Lower leg skin (tissue), 4 donors: ENCODE measurements at regions of chr1 and their contacts with region 1.

Region 1: DNA sequence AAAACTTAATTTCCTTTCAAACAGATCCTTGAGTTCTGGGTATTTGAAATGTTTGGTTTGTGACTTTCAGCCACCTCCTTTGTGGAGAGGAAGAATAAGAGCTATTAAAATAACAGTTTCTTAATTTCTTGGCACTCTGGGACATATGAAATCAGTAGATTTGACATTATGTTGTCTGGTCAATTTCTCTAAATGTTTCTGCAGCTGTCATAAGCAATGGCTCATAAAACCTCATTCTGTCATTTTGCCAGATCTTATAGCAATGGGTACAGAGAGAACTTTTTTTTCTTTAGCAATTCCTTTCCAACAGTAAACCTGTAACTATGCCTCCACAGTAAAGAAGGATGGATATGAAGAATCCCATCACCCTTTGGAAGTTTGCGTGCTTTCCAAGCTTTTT is 52.6 kb downstream of the LAMC1 start:
- DNase-seq: no peak
- H3K4me3 ChIP-seq: no peak overlapping the region
- CTCF ChIP-seq: no peak
- POLR2A ChIP-seq: no peak

Region 2: DNA sequence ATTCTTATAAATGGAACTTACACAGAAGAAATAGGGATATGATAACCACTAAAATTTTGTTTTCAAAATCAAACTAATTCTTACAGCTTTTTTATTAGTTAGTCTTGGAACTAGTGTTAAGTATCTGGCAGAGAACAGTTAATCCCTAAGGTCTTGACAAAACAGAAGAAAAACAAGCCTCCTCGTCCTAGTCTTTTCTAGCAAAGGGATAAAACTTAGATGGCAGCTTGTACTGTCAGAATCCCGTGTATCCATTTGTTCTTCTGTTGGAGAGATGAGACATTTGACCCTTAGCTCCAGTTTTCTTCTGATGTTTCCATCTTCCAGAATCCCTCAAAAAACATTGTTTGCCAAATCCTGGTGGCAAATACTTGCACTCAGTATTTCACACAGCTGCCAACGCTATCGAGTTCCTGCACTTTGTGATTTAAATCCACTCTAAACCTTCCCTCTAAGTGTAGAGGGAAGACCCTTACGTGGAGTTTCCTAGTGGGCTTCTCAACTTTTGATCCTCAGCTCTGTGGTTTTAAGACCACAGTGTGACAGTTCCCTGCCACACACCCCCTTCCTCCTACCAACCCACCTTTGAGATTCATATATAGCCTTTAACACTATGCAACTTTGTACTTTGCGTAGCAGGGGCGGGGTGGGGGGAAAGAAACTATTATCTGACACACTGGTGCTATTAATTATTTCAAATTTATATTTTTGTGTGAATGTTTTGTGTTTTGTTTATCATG is 67.9 kb after region 1 on chr1:
- intact Hi-C with region 1: loop called (anchors 2 kb)
- DNase-seq: no peak
- H3K4me3 ChIP-seq: no peak overlapping the region
- CTCF ChIP-seq: no peak
- POLR2A ChIP-seq: no peak